Breast epithelium (tissue), 4 donors: ENCODE measurements at regions of chr12 and their contacts with region 1.

Region 1: DNA sequence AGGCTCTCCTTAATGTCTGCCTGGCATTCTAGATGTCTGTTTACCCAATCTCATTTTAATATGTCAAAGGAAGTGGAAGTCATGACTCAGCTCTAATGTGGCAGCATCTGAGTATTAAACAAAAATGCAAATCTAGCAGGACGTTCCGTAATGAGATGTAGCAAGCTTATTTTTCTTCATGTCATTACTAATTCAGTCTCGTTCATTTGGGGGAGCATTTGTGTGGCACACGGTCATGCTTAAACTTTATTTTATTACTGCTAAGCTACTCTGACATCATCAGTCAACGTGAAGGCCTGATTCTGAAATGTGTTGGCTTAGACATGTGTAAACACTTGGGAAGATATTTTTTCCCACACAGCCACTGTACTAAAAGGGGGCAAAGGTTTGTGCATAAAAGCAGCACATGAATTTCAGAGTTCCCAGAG is 326.7 kb upstream of the TMPO start:
- DNase-seq: no peak
- H3K4me3 ChIP-seq: no peak overlapping the region
- H3K27ac ChIP-seq: no peak overlapping the region
- H3K4me1 ChIP-seq: no peaks in the 10 kb centered on the region
- H3K27me3 ChIP-seq: no peaks in the 10 kb centered on the region
- CTCF ChIP-seq: no peak
- POLR2A ChIP-seq: no peak

Region 2: DNA sequence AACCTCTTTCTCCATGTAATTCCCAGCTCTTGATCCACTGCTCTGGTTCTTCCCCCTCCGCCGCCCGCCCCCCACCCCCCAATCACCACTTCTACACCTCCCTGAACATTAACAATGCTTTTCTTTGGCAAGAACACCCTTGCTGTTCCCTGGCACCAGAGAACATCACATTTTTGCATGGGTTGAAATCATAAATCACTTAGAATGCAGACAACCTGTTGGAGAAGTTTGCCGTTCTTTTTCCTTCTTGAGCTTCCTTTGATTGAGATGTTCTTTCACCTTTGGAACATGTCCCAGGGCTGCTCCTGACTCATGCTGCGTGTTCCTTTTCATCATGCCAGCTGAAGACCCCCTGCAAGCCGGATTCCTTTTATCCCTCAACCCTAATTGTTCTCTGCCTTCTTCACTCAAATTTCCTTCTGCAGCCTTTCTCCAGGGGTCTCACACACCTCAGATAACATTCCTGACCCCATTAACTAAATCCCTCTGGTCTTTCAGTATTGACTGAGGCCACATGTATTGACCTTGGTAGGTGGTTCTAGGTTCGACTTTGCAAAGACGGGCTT is 32.7 kb after region 1 on chr12:
- intact Hi-C with region 1: loop called (anchors 1 kb)
- DNase-seq: no peak
- H3K4me3 ChIP-seq: no peak overlapping the region
- H3K27ac ChIP-seq: no peak overlapping the region
- H3K4me1 ChIP-seq: no peaks in the 10 kb centered on the region
- H3K27me3 ChIP-seq: peaks cover 0 to 4% of the 10 kb centered on the region in 2 donors
- CTCF ChIP-seq: no peak
- POLR2A ChIP-seq: no peak